Activated T-helper 1 cell treated with anti-CD3 and anti-CD28 coated beads, Interleukin-12 subunit alpha, Interleukin-12 subunit beta, Interleukin-2, Interleukin-4 antibody, amounts not matched to agents 30 ng/mL and 10 ng/mL and 1 ng/mL, durations not matched to agents 14 hours and 24 hours and 36 hours (primary cell): ENCODE measurements at regions of chr1 and their contacts with region 1.

Region 1: DNA sequence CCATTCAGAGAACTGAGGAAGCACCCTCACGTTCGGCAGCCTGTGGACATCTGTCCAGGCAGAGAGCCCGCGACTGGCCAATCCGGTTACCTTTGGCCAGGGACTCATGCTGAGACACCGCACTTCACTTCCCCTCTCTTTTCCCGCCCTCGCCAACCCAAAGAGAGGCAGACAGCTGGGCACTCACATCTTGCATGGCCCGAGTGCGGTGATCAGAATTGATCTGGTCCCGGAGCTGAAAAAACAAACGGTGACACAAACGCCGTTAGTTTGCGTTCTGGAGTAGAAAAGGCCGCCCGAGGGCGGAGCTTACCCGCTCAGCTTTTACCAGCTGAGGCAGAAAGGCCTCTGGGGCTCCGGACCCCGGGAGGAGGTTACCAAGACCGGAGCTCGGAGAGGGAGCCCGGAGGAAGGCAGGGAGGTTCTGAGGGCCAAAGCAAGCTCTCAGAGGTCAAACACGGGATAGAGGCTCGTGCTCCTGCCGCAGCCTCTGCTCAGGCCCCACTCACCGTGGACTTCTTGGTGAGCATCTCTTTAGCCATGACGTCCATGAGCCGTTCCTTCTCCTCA is 376 bp downstream of the SF3A3 start:
- DNase-seq: peak; percentile 41
- H3K4me3 Mint-ChIP-seq: peak overlapping the region; percentile 96
- H3K27ac Mint-ChIP-seq: peak overlapping the region; percentile 94
- H3K4me1 Mint-ChIP-seq: peaks cover 17% of the 10 kb centered on the region
- H3K27me3 Mint-ChIP-seq: no peaks in the 10 kb centered on the region

Region 2: DNA sequence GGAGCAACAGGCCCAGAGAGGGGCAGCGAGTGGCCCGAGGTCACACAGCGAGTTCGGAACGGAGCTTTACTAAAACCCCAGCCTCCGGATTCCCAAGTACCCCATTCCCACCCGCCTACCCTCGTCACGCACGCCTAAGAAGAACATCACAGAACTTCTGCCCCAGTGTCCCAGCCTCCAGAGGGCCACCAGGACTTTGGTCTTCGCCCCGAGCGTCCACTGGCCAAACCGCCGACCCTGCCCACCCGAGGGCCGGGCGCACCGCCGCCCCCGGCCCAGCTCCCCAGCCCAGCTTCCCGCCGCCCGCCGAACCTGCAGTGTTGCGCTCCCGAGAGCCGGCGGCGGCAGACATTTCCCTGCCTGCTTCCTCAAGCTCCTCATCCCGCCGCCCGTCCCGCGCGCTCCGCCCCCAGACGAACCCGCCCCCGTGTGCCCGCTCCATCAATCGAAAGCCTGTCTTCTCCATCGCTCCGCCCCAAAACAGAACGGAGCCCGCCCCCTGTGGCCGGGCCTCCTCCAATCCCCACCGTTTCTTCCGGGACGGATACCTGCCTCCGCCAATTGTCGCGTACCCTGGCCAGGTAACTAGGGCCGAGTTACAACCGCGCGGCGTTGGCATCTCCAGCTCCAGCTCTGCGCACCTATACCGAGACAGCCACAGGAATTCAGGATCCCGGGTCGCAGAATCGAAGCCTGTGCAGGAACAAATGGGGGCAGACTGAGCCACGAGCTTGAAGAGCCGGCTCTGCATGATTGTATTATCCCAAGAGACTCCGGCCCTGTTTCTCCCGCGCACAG is 57.9 kb before region 1 on chr1:
- intact Hi-C with region 1: loop called (anchors 1 kb)
- DNase-seq: peak; percentile 96
- H3K4me3 Mint-ChIP-seq: peak overlapping the region; percentile 95
- H3K27ac Mint-ChIP-seq: peak overlapping the region; percentile 81
- H3K4me1 Mint-ChIP-seq: peaks cover 28% of the 10 kb centered on the region
- H3K27me3 Mint-ChIP-seq: no peaks in the 10 kb centered on the region

Region 3: DNA sequence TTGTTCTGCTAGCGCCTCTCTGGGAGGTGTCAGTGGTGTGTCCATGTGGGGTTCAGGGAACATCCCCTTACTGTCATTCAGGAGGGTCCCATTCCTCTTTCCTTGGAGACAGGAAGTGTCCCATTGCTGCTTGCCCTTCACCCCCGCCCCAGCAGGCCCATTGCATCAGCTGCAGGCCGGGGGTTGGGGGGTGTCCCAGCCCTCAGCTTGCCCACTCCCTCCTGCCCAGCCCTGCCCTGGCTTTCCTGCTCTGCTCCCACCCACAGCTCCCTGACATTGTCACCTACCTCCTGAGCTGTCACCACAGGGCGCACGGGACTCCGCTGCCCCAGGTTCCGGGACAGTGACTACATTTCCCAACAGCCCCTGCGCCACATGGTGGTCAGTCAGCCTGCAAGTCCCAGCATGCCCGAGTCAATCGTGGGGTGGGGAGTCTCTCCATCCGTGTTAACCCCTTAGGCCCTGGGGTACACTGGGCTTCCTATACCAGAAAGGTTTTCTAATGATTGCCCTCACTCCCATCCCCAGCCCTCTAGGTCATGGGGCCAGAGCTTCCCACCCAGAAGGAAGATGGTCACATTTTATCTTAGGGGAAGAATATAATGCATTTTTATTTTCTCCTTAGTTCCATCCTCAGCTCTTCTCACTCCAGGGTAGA is 42.6 kb before region 1 on chr1 and contains the start of gene INPP5B:
- intact Hi-C with region 1: loop called (anchors 5 kb)
- DNase-seq: peak; percentile 78
- H3K4me3 Mint-ChIP-seq: peak within 1 kb of the TSS; percentile 91
- H3K27ac Mint-ChIP-seq: peak within 1 kb of the TSS; percentile 96
- H3K4me1 Mint-ChIP-seq: peaks cover 19% of the 10 kb centered on the region
- H3K27me3 Mint-ChIP-seq: no peaks in the 10 kb centered on the region
- total RNA-seq, gene INPP5B: 23.6 and 27.2 TPM in 2 replicates

Region 4: DNA sequence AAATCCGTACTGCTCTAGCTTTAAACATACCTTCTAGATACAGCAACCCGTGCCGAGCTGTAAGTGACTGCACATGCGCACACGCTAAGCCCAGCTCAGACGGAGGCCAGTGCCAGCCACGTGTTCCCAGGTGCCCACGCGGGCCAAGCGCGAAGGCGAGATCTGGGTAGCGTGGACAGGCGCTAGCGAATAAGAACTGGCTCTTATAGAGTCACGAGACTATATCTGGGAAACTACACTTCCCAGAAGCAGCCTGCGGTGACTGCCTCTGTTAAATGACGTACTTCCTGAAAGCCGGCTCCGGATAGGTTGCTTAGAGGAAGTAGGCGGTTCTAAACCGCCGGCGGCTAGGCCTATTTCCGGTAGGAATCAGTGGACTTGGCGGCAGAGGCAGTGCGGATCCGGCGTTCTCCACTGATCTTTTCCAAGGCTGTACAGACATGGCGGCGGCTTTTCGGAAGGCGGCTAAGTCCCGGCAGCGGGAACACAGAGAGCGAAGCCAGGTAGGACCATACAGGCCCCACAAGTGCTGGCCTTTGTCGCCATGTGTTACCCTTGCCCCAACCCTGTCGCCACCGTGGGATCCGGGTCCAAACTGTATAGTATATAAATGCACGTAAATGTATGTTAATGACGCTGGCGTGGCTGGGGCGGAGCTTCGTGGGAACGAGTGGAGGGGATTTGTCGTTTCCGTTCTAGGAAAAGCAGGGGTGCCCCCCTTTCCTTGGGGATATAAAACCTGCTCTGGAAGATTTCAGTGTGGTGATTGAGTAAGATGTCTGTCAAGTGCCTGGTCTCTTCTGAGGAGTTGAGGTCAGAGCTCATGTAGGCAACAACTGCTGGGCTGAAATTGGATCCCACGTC is 23.1 kb after region 1 on chr1 and contains the start of gene UTP11:
- intact Hi-C with region 1: loop called (anchors 1 kb)
- DNase-seq: peak; percentile 87
- H3K4me3 Mint-ChIP-seq: peak within 1 kb of the TSS; percentile 96
- H3K27ac Mint-ChIP-seq: peak within 1 kb of the TSS; percentile 93
- H3K4me1 Mint-ChIP-seq: peaks cover 54% of the 10 kb centered on the region
- H3K27me3 Mint-ChIP-seq: no peaks in the 10 kb centered on the region
- total RNA-seq, gene UTP11: 106 and 108 TPM in 2 replicates

Region 5: GRCh38 chr1:38018864-38019343 is 29.5 kb after region 1 on chr1:
- intact Hi-C with region 1: loop called (anchors 1 kb)
- DNase-seq: no peak
- H3K4me3 Mint-ChIP-seq: no peak overlapping the region
- H3K27ac Mint-ChIP-seq: peak overlapping the region; percentile 40
- H3K4me1 Mint-ChIP-seq: peaks cover 16% of the 10 kb centered on the region
- H3K27me3 Mint-ChIP-seq: no peaks in the 10 kb centered on the region

Region 6: DNA sequence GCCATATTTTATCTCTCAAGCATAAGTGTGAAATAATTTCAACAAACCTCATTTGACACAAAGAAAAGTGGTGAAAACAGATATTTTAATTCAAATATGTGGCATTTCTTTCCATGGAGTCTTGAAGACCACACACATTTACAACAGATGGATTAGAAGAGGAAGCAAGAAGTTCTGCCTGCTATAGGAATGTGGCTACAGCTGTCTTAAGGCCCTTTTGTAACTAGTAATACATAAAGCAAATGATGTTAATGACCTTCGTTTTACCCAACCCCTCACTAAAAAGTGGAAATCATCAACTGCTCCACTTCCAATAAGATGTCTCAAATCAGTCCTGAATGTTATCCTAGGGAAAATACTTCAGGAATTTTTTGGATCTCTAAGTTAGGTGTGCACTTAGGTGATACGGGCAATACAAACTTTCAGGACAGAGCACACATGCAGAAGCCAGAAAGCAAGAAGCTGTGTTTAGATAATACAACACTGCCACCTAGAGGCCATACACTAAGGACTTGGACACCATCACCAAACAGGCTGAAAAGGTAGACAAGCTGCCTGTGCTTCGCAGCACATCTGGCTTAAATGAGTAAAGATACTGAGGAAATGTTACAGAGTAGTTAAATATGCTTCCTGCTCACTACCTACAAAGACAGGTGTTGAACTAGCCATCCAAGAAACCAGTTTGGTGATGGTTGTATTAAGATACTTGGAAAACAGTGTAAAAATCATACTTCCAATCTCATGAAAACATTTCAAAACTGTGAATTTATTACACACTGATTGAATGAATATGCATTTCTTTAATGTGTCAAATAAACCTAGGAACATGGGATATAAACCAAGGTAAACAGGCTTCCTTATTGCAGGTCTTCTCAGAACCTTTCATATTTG is 845.7 kb after region 1 on chr1:
- intact Hi-C with region 1: loop called (anchors 1 kb)
- DNase-seq: peak; percentile 34
- H3K4me3 Mint-ChIP-seq: no peak overlapping the region
- H3K27ac Mint-ChIP-seq: no peak overlapping the region
- H3K4me1 Mint-ChIP-seq: peaks cover 7% of the 10 kb centered on the region
- H3K27me3 Mint-ChIP-seq: peaks cover 16% of the 10 kb centered on the region